ENCODE measurements at regions of chr6 and their contacts with region 1.

Region 1: GRCh38 chr6:130322673-130323268 is 43.0 kb upstream of the TMEM200A start:
- DNase-seq: peak in 7 of 10 donors; percentile 28 to 93 (median 52)

Region 2: GRCh38 chr6:130076512-130076911 is 246.3 kb before region 1 on chr6:
- intact Hi-C with region 1: no loop called
- DNase-seq: no peak

Region 3: DNA sequence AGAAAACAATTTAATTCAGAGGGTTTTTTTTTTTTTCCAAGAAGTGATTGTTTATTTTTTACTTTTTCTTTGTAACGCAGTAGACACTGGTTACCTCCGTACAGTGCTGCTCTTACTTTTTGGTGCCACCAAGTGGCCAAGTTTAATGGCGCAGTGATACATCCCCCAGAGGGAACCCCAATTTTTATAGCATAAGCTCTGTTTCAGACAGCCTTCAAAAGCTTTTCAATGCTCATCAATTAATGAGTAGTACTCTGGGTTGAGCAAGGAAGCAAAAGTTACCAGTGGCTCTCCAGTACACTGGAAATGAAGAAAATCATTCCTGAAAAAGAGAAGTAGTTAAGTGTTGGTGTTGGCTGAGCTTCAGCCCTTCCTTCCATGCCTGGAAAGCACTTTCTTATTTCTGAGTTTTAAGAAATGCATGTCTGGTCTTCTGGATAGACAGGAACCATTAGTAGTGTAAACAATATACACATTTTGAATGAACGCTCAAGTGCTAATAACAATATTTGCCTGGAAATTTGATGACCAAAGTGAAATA is 375.3 kb after region 1 on chr6:
- intact Hi-C with region 1: loop called (anchors 5 kb)
- DNase-seq: peak in 6 of 10 donors; percentile 13 to 83 (median 52)

Region 4: GRCh38 chr6:130843575-130844320 is 521.0 kb after region 1 on chr6:
- intact Hi-C with region 1: loop called (anchors 10 kb)
- DNase-seq: no peak

Region 5: DNA sequence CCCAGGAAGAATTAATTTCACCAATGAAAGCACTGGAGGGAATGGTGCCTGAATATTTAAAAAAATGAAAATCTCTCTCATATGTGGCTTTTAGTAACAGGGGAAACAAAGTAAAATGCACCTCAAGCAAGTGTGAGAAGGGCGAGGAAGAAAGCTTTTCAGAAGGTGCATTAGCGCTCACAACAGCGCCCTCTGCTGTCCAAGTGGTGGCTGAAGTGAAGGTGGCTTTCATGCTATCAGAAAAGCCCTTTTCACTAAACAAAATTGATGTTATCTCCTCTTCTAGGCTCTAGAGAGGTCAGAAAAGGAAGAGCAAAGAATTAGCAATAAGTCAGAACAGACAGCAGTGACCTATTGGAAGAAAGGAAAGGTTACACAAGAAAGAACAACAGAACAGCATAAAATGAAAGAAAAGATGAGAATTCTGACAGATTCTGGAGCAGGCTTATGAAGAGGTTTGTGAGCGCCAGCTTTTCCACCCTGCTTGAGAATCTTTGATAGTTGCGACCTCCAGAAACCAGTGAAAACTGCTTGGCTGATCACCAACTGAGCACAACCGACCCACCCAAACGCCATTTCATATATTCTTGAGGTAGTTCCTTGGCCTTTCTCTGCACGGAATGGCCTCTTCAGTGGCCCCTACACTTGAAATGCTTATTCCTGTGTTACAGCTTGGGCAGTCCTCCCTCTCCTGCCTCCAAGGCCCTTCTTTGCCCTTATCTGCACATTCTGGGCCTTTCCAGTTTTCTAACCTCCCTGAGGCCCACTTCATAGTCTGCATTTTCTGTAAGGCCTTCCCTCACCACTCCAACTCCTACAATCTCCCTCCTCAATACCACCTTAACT is 549.7 kb after region 1 on chr6:
- intact Hi-C with region 1: loop called (anchors 1 kb)
- DNase-seq: peak; percentile 58 to 96 (median 81)

Measured in posterior cingulate gyrus (tissue), 11 donors.